CD4-positive, alpha-beta T cell (primary cell): ENCODE measurements at regions of chr10 and their contacts with region 1.

Region 1: GRCh38 chr10:119494236-119495060 is 48.1 kb downstream of the RGS10 start:
- DNase-seq: peak in 1 of 14 experiments; percentile 23
- ATAC-seq: no peak
- H3K4me3 ChIP-seq: no peak overlapping the region
- H3K4me3 Mint-ChIP-seq: peak overlapping the region; percentile 57
- H3K27ac ChIP-seq: peak overlapping the region; percentile 33 to 57
- H3K27ac Mint-ChIP-seq: peak overlapping the region; percentile 92
- H3K4me1 ChIP-seq: peaks cover 72% of the 10 kb centered on the region
- H3K4me1 Mint-ChIP-seq: peaks cover 80% of the 10 kb centered on the region
- H3K27me3 ChIP-seq: no peaks in the 10 kb centered on the region
- H3K27me3 Mint-ChIP-seq: no peaks in the 10 kb centered on the region
- CTCF ChIP-seq: no peak

Region 2: DNA sequence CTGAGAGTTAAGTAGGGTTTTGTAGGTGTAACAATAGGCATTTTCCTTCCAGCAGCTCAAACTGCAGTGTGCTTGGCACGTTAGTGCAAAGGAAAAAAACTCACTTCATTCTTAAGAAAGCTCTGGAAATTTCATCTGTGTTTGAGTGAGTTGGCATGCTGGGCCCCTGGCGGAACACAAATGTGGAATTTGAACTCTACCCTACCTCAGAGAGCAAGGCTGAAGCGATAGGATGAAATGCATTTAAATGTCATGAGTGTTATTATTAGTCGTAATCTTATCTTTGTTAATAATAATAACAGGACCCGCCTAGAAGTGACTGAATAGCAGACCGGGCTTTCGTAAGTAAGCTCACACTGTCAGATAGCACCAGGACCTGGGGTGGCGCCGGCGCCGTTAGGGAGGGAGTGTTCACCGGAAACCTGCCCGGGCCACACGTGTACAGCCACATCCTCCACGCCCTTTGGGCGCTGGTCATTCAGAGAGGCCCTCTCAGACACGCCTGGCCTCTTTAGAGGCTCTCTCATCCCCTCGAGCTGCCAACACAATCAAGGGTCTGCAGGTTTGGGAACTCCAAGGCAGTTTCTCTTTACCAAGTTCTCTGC is 223.6 kb before region 1 on chr10:
- CTCF ChIA-PET with region 1: no interaction called
- POLR2A ChIA-PET with region 1: no interaction called
- intact Hi-C with region 1: no loop called
- DNase-seq: peak; percentile 12 to 76 (median 42)
- ATAC-seq: no peak
- H3K4me3 ChIP-seq: peak overlapping the region; percentile 44
- H3K4me3 Mint-ChIP-seq: peak overlapping the region; percentile 74
- H3K27ac ChIP-seq: peak overlapping the region in 1 of 2 donors; percentile 20
- H3K27ac Mint-ChIP-seq: peak overlapping the region; percentile 96
- H3K4me1 ChIP-seq: peaks cover 65% of the 10 kb centered on the region
- H3K4me1 Mint-ChIP-seq: peaks cover 69% of the 10 kb centered on the region
- H3K27me3 ChIP-seq: no peaks in the 10 kb centered on the region
- H3K27me3 Mint-ChIP-seq: no peaks in the 10 kb centered on the region
- CTCF ChIP-seq: no peak

Region 3: GRCh38 chr10:119431034-119431767 is 63.2 kb before region 1 on chr10:
- CTCF ChIA-PET with region 1: no interaction called
- POLR2A ChIA-PET with region 1: no interaction called
- intact Hi-C with region 1: no loop called
- DNase-seq: no peak
- ATAC-seq: no peak
- H3K4me3 ChIP-seq: no peak overlapping the region
- H3K4me3 Mint-ChIP-seq: no peak overlapping the region
- H3K27ac ChIP-seq: no peak overlapping the region
- H3K27ac Mint-ChIP-seq: no peak overlapping the region
- H3K4me1 ChIP-seq: peaks cover 13% of the 10 kb centered on the region
- H3K4me1 Mint-ChIP-seq: peaks cover 16% of the 10 kb centered on the region
- H3K27me3 ChIP-seq: no peaks in the 10 kb centered on the region
- H3K27me3 Mint-ChIP-seq: no peaks in the 10 kb centered on the region
- CTCF ChIP-seq: no peak

Region 4: DNA sequence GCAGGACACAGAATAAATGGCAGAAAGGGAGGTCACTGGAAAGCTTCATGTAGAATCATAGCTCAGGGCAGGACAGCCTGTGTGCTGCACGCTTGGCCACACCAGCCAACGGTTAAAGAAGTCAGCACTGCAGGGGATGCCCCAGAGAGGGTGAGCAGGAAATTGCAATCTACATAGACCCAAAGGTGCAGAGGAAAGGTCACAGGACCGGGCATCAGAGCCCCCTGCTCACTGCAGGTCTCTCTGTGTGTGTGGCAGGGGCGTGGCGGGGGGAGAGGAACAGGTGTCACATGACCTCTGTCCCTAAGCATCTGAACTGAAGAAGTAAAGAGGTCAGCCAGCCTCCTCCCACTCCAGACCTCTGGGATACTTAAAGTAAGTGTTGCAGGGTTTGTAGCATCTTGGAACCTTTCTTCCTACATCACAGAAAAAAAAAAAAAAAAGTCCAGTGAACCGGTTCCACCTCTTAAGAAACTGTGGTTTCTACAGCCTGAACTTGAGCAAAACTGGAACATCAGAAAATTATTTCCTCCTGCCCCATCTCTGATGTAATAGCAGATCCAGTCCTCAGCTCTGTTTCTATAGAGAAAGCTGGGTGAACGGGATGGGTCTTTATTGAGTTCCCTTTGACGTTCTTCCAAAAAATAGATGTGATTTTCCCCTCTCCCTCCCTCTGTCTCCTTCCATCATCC is 16.2 kb before region 1 on chr10:
- CTCF ChIA-PET with region 1: interaction called, 3 read pairs
- POLR2A ChIA-PET with region 1: interaction called, 10 read pairs
- intact Hi-C with region 1: no loop called
- DNase-seq: peak in 6 of 14 experiments; percentile 7 to 55 (median 44)
- ATAC-seq: peak; percentile 51
- H3K4me3 ChIP-seq: no peak overlapping the region
- H3K4me3 Mint-ChIP-seq: peak overlapping the region; percentile 55
- H3K27ac ChIP-seq: peak overlapping the region in 1 of 2 donors; percentile 7
- H3K27ac Mint-ChIP-seq: peak overlapping the region; percentile 35
- H3K4me1 ChIP-seq: peaks cover 31% of the 10 kb centered on the region
- H3K4me1 Mint-ChIP-seq: peaks cover 34% of the 10 kb centered on the region
- H3K27me3 ChIP-seq: no peaks in the 10 kb centered on the region
- H3K27me3 Mint-ChIP-seq: no peaks in the 10 kb centered on the region
- CTCF ChIP-seq: no peak

Region 5: DNA sequence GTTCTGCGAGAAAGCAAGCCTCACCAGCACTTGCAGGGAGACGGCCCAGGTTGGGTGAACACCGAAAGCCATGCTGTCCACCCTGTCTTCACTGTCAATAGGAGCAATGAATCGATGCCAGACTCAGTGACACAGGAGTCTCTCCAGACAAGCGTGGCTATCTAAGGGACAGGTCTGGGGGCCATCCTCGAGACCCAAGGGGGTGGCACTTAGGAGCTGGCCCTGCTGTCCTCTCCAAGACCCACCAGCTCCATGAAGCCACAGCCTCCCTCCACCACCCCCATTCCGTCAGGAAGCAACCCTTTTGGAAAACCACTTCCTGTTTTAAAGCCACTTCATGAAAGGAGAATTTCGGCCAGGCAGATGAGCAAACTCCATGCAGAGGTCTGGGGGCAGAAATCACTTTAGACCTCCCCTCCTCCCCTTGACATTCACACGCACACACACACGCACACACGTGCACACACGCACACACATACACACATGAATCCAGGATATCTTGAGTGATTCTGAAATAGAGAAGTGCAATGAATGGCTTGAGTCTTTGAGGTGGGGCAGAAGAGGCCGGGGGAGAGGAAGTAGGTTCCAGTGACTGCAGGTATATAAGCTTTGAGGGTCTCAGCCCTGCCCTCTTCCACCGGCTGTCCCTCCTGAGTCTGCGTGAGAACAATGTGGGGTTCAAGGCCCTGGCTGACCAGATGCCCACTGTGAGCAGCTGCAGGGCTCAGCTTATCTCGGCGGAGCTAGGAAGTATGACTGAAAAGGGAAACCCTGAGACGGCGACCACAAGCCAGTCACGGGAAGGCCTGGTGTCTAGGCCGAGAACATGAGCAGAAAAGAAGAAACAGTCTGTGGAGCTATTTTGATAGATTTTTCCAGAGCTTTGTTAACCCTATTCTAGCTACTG is 23.0 kb after region 1 on chr10:
- CTCF ChIA-PET with region 1: interaction called, 3 read pairs
- POLR2A ChIA-PET with region 1: interaction called, 20 read pairs
- intact Hi-C with region 1: loop called in 1 of 2 experiments (anchors 2 kb)
- DNase-seq: peak in 10 of 14 experiments; percentile 38 to 80 (median 51)
- ATAC-seq: peak; percentile 22
- H3K4me3 ChIP-seq: peak overlapping the region; percentile 27
- H3K4me3 Mint-ChIP-seq: peak overlapping the region; percentile 86
- H3K27ac ChIP-seq: peak overlapping the region; percentile 71 to 91
- H3K27ac Mint-ChIP-seq: peak overlapping the region; percentile 98
- H3K4me1 ChIP-seq: peaks cover 64% of the 10 kb centered on the region
- H3K4me1 Mint-ChIP-seq: peaks cover 76% of the 10 kb centered on the region
- H3K27me3 ChIP-seq: no peaks in the 10 kb centered on the region
- H3K27me3 Mint-ChIP-seq: no peaks in the 10 kb centered on the region
- CTCF ChIP-seq: no peak

Region 6: GRCh38 chr10:119892188-119893065 is 398.0 kb after region 1 on chr10 and contains the start of gene SEC23IP:
- CTCF ChIA-PET with region 1: no interaction called
- POLR2A ChIA-PET with region 1: no interaction called
- intact Hi-C with region 1: no loop called
- DNase-seq: peak; percentile 82 to 94 (median 86)
- ATAC-seq: peak; percentile 99
- H3K4me3 ChIP-seq: peak within 1 kb of the TSS; percentile 98
- H3K4me3 Mint-ChIP-seq: peak within 1 kb of the TSS; percentile 95
- H3K27ac ChIP-seq: peak within 1 kb of the TSS; percentile 76 to 91
- H3K27ac Mint-ChIP-seq: peak within 1 kb of the TSS; percentile 95
- H3K4me1 ChIP-seq: peaks cover 27% of the 10 kb centered on the region
- H3K4me1 Mint-ChIP-seq: peaks cover 59% of the 10 kb centered on the region
- H3K27me3 ChIP-seq: no peaks in the 10 kb centered on the region
- H3K27me3 Mint-ChIP-seq: no peaks in the 10 kb centered on the region
- CTCF ChIP-seq: no peak
- total RNA-seq, gene SEC23IP: 18.1 to 21.1 TPM